HEK293 (cell line): ENCODE measurements at regions of chr9 and their contacts with region 1.

Region 1: GRCh38 chr9:120985810-120986222 is 59.2 kb upstream of the TRAF1 start:
- H3K4me3 ChIP-seq: no peak overlapping the region
- H3K27ac ChIP-seq: no peak overlapping the region
- H3K4me1 ChIP-seq: no peaks in the 10 kb centered on the region
- CTCF ChIP-seq: no peak; the same call in 1 of the 2 replicates

Region 2: DNA sequence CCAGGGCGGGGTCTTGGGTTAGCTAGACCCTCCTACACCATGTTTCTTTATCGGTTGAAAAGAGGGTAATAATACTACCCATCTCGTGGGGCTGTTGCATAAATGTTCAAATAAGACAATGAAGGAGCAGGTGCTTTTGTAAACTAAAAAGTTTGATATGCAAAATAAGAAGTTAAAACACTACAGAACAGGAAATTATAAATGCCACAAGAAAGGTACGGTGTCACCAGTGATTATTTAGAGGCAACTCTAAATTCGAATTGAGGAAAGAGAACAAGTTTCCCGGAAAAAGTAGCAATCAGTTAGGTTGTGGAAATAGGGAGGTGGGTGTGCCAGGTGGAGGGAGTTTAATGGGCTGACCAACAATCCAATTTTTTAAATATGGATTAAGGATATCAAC is 106.4 kb before region 1 on chr9:
- CTCF ChIA-PET with region 1: no interaction called
- POLR2A ChIA-PET with region 1: no interaction called
- H3K4me3 ChIP-seq: no peak overlapping the region
- H3K27ac ChIP-seq: no peak overlapping the region
- H3K4me1 ChIP-seq: no peaks in the 10 kb centered on the region
- CTCF ChIP-seq: no peak

Region 3: GRCh38 chr9:120971938-120972337 is 13.9 kb before region 1 on chr9:
- CTCF ChIA-PET with region 1: interaction called, 10 read pairs
- POLR2A ChIA-PET with region 1: no interaction called
- H3K4me3 ChIP-seq: no peak overlapping the region
- H3K27ac ChIP-seq: no peak overlapping the region
- H3K4me1 ChIP-seq: no peaks in the 10 kb centered on the region
- CTCF ChIP-seq: no peak

Region 4: GRCh38 chr9:121034529-121034928 is 48.7 kb after region 1 on chr9:
- CTCF ChIA-PET with region 1: interaction called, 14 read pairs
- POLR2A ChIA-PET with region 1: no interaction called
- H3K4me3 ChIP-seq: no peak overlapping the region
- H3K27ac ChIP-seq: no peak overlapping the region
- H3K4me1 ChIP-seq: no peaks in the 10 kb centered on the region
- CTCF ChIP-seq: no peak

Region 5: GRCh38 chr9:121545875-121546423 is 560.1 kb after region 1 on chr9:
- CTCF ChIA-PET with region 1: no interaction called
- POLR2A ChIA-PET with region 1: no interaction called
- H3K4me3 ChIP-seq: peak overlapping the region; percentile 21
- H3K27ac ChIP-seq: no peak overlapping the region
- H3K4me1 ChIP-seq: no peaks in the 10 kb centered on the region
- CTCF ChIP-seq: peak; percentile 87